ENCODE measurements at regions of chr14 and their contacts with region 1.

Region 1: GRCh38 chr14:34059855-34060638 is 109.2 kb upstream of the EGLN3 start:
- DNase-seq: peak; percentile 76

Region 2: DNA sequence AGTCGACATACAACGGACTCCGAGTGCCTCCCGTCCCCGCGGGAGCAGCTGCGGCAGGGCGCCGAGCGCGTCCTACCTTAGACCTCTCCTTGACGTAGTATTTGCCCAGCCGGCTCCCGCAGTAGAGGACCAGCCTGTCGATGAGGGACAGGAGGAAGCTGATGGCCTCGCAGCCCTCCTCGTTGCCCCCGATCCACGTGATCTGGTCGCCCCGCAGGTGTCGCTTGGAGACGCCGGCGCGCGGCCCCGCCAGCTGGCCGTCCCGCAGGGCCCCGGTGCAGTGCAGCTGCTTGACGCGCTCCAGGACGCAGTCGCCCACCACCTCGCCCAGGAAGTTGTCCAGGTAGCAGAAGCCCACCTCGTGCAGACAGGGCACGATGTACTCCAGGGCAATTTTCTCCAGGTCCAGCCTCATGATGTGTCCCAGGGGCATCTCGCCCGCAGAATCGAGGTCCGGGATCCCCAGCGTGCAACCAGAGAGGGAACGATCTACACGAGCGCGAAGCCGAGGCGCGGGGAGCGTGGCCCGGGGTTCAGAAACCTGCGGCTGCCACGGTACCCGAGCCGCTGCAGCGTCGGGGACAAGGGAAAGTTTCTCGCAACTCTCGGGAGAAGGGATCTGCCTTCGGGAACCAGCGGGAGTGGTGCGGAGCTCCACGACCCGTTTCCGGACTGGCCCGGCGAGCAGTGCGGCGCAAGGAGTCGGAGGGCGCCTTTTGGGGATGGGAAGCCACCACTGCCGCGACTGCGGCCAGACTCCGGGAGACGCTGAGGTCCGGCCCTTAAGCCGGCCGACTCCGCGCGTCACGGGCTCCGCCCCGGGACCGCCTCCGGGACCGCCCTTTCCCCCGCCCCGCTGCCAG is 109.5 kb before region 1 on chr14 and contains the start of gene EGLN3:
- CTCF ChIA-PET with region 1: no interaction called
- POLR2A ChIA-PET with region 1: interaction called, 12 read pairs
- DNase-seq: peak; percentile 91